CD8-positive, alpha-beta memory T cell (primary cell): ENCODE measurements at regions of chr6 and their contacts with region 1.

Region 1: GRCh38 chr6:24855395-24856245 is 56.9 kb upstream of the ARMH2 start:
- DNase-seq: peak; percentile 43 to 78 (median 68)
- H3K4me3 ChIP-seq: no peak overlapping the region
- H3K4me3 Mint-ChIP-seq: peak overlapping the region in 6 of 7 donors; percentile 35 to 69 (median 60)
- H3K27ac ChIP-seq: no peak overlapping the region
- H3K27ac Mint-ChIP-seq: peak overlapping the region; percentile 47 to 95 (median 87)
- H3K4me1 ChIP-seq: peaks cover 55% of the 10 kb centered on the region
- H3K4me1 Mint-ChIP-seq: peaks cover 53 to 57% (median 56%) of the 10 kb centered on the region in 3 donors
- H3K27me3 ChIP-seq: no peaks in the 10 kb centered on the region
- H3K27me3 Mint-ChIP-seq: peaks cover 0 to 2% of the 10 kb centered on the region in 2 donors

Region 2: GRCh38 chr6:24844903-24845302 is 10.7 kb before region 1 on chr6:
- CTCF ChIA-PET with region 1: interaction called, 11 read pairs
- POLR2A ChIA-PET with region 1: no interaction called
- DNase-seq: no peak
- H3K4me3 ChIP-seq: no peak overlapping the region
- H3K4me3 Mint-ChIP-seq: no peak overlapping the region
- H3K27ac ChIP-seq: no peak overlapping the region
- H3K27ac Mint-ChIP-seq: peak overlapping the region in 6 of 8 donors; percentile 55 to 82 (median 76)
- H3K4me1 ChIP-seq: peaks cover 46% of the 10 kb centered on the region
- H3K4me1 Mint-ChIP-seq: peaks cover 50 to 73% (median 73%) of the 10 kb centered on the region in 3 donors
- H3K27me3 ChIP-seq: no peaks in the 10 kb centered on the region
- H3K27me3 Mint-ChIP-seq: peaks cover 0 to 4% of the 10 kb centered on the region in 2 donors

Region 3: DNA sequence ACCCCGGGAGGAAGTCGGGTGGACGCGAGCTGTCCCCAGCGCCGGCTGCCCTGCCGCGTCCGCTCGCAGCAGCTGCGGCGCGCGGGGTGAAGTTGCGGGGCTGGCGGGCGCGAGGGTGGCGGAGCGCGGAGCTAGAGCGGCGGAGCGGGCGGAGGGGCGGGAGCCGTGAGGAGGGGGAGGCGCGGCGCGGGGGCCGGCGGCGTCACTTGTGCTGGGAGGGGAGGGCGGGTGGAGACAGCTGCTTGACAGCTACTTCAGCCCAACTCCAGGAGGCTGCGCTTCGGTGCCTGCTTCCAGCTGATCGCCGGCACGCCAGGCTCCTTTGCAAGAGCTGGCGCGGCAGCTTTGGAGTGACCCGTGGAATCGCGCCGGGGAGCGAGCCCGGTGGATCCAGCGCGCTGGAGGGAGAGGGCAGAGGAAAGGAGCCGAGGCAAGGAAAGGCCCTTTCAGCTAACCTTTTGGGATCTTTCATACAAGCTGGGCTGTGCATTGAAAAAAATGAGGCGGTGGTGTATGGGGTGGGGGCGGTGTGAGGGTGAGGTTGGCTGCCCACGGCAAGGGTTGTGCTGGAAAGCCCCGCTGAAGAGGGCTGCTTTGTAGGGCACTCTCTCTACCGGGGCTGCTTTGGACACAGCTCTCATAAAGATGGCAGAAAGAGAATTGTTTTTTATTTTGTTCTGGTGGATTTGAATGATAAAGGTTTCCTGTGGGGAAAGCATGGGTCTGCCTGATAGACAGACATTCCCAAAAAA is 55.5 kb after region 1 on chr6:
- CTCF ChIA-PET with region 1: interaction called, 15 read pairs
- POLR2A ChIA-PET with region 1: no interaction called
- DNase-seq: peak; percentile 20 to 63 (median 47)
- H3K4me3 ChIP-seq: peak overlapping the region; percentile 61
- H3K4me3 Mint-ChIP-seq: peak overlapping the region; percentile 89 to 98 (median 94)
- H3K27ac ChIP-seq: peak overlapping the region; percentile 51
- H3K27ac Mint-ChIP-seq: peak overlapping the region; percentile 90 to 99 (median 98)
- H3K4me1 ChIP-seq: peaks cover 95% of the 10 kb centered on the region
- H3K4me1 Mint-ChIP-seq: peaks cover 96 to 97% (median 97%) of the 10 kb centered on the region in 3 donors
- H3K27me3 ChIP-seq: no peaks in the 10 kb centered on the region
- H3K27me3 Mint-ChIP-seq: no peaks in the 10 kb centered on the region

Region 4: DNA sequence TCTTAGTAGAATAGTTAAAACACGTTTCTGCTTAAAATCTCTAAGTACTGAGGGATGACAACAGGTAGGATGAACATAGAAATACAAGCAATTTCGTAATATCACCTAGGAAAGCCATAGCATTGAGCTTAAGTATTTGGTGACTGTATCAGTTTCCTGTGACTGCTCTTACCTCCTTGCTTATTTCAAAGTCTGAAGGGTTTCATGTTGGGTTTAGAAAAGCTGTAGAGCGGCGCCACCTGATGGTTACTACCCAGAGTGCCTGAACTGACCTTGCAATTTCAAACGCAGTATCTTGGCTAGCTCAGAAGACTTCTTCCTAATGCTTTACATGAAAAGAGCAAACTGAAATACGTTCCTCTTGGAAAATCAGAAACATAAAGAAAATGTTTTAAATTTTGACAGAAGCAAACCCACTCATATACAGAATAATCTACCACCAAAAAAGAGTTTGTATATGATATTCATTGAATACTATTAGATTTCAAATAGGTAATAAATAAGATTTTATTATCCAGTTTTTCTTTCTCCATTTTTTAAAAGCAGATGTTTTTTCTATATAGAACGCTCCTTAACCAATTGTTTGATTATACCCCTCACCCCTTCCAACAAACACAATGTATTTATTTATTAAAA is 162.4 kb after region 1 on chr6:
- CTCF ChIA-PET with region 1: interaction called, 131 read pairs
- POLR2A ChIA-PET with region 1: interaction called, 8 read pairs
- DNase-seq: peak; percentile 67 to 86 (median 72)
- H3K4me3 ChIP-seq: no peak overlapping the region
- H3K4me3 Mint-ChIP-seq: peak overlapping the region in 3 of 7 donors; percentile 13 to 41 (median 22)
- H3K27ac ChIP-seq: no peak overlapping the region
- H3K27ac Mint-ChIP-seq: peak overlapping the region in 7 of 8 donors; percentile 43 to 97 (median 75)
- H3K4me1 ChIP-seq: peaks cover 29% of the 10 kb centered on the region
- H3K4me1 Mint-ChIP-seq: peaks cover 40 to 54% (median 48%) of the 10 kb centered on the region in 3 donors
- H3K27me3 ChIP-seq: no peaks in the 10 kb centered on the region
- H3K27me3 Mint-ChIP-seq: no peaks in the 10 kb centered on the region

Region 5: GRCh38 chr6:25070547-25071366 is 215.1 kb after region 1 on chr6:
- CTCF ChIA-PET with region 1: interaction called, 20 read pairs
- POLR2A ChIA-PET with region 1: no interaction called
- DNase-seq: peak; percentile 70 to 87 (median 79)
- H3K4me3 ChIP-seq: no peak overlapping the region
- H3K4me3 Mint-ChIP-seq: peak overlapping the region in 6 of 7 donors; percentile 50 to 86 (median 74)
- H3K27ac ChIP-seq: no peak overlapping the region
- H3K27ac Mint-ChIP-seq: peak overlapping the region in 7 of 8 donors; percentile 52 to 89 (median 81)
- H3K4me1 ChIP-seq: no peaks in the 10 kb centered on the region
- H3K4me1 Mint-ChIP-seq: peaks cover 5 to 9% (median 5%) of the 10 kb centered on the region in 3 donors
- H3K27me3 ChIP-seq: no peaks in the 10 kb centered on the region
- H3K27me3 Mint-ChIP-seq: no peaks in the 10 kb centered on the region